ENCODE measurements at regions of chr2 and their contacts with region 1.

Region 1: DNA sequence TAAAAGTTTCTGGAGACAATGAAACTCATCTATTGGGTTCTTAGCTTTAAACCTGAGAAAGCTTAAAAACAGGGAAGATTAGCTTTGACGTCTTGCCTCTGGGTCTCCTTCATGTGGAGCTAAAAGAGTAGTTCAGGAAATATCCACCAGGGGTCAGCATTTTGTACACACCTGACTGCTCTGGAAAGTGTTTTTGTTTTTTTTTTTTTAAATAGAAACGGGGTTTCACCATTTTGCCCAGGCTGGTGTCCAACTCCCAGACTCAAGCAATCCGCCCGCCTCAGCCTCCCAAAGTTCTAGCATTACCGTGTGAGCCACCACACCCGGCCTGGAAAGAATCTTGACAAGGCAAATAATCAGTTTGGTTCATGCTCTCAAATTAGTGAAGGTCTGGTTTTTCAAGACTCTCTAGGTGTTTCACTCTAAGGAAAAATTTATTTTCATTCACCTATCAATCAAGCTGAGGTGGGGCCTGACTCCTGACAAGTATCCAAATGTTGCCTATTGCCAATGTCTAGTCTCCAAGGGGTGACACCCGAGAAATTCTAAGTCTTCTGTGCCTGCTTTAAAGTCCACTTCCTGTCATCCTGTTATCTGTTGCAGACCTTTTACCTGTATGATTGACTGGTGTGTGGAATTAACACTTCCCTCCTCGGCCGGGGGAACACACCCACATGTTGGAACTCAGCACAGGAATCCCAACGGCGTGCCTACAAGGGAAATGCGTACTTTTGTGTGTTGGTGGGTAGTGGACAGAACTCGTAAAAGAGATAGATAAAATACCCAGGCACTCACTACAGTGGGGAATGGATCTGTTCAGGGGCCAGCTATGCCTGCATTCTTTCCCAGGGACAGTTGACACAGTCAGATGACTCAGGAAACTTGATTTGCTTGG is 11.3 kb downstream of the IL1RN start:
- DNase-seq: peak; percentile 61
- H3K4me3 Mint-ChIP-seq: no peak overlapping the region
- H3K27ac Mint-ChIP-seq: peak overlapping the region; percentile 42
- H3K4me1 Mint-ChIP-seq: peaks cover 28% of the 10 kb centered on the region
- H3K27me3 Mint-ChIP-seq: peaks cover 7% of the 10 kb centered on the region

Region 2: GRCh38 chr2:112947374-112947773 is 191.3 kb before region 1 on chr2:
- CTCF ChIA-PET with region 1: no interaction called
- DNase-seq: no peak
- H3K4me3 Mint-ChIP-seq: no peak overlapping the region
- H3K27ac Mint-ChIP-seq: no peak overlapping the region
- H3K4me1 Mint-ChIP-seq: no peaks in the 10 kb centered on the region
- H3K27me3 Mint-ChIP-seq: peaks cover 18% of the 10 kb centered on the region

Region 3: GRCh38 chr2:113061901-113062430 is 76.7 kb before region 1 on chr2:
- CTCF ChIA-PET with region 1: no interaction called
- DNase-seq: no peak
- H3K4me3 Mint-ChIP-seq: no peak overlapping the region
- H3K27ac Mint-ChIP-seq: no peak overlapping the region
- H3K4me1 Mint-ChIP-seq: no peaks in the 10 kb centered on the region
- H3K27me3 Mint-ChIP-seq: peaks cover 7% of the 10 kb centered on the region

Region 4: DNA sequence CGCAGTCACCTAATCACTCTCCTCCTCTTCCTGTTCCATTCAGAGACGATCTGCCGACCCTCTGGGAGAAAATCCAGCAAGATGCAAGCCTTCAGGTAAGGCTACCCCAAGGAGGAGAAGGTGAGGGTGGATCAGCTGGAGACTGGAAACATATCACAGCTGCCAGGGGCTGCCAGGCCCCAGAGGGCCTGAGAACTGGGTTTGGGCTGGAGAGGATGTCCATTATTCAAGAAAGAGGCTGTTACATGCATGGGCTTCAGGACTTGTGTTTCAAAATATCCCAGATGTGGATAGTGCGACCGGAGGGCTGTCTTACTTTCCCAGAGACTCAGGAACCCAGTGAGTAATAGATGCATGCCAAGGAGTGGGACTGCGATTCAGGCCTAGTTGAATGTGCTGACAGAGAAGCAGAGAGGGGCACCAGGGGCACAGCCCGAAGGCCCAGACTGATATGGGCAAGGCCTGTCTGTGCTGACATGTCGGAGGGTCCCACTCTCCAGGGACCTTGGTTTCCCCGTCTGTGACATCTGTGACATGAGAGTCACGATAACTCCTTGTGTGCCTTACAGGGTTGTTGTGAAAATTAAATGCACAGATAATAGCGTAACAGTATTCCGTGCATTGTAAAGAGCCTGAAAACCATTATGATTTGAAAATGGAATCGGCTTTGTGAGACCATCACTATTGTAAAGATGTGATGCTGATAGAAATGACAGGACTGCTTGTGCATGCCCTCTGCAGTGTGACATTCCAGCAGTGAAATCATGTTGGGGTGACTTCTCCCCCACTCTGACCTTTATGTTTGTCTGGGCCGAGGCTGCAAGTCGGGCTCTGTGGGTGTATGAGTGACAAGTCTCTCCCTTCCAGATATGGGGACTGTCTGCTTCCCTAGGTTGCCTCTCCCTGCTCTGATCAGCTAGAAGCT is 10.8 kb before region 1 on chr2:
- CTCF ChIA-PET with region 1: interaction called, 10 read pairs
- DNase-seq: no peak
- H3K4me3 Mint-ChIP-seq: no peak overlapping the region
- H3K27ac Mint-ChIP-seq: no peak overlapping the region
- H3K4me1 Mint-ChIP-seq: peaks cover 14% of the 10 kb centered on the region
- H3K27me3 Mint-ChIP-seq: peaks cover 31% of the 10 kb centered on the region

Region 5: DNA sequence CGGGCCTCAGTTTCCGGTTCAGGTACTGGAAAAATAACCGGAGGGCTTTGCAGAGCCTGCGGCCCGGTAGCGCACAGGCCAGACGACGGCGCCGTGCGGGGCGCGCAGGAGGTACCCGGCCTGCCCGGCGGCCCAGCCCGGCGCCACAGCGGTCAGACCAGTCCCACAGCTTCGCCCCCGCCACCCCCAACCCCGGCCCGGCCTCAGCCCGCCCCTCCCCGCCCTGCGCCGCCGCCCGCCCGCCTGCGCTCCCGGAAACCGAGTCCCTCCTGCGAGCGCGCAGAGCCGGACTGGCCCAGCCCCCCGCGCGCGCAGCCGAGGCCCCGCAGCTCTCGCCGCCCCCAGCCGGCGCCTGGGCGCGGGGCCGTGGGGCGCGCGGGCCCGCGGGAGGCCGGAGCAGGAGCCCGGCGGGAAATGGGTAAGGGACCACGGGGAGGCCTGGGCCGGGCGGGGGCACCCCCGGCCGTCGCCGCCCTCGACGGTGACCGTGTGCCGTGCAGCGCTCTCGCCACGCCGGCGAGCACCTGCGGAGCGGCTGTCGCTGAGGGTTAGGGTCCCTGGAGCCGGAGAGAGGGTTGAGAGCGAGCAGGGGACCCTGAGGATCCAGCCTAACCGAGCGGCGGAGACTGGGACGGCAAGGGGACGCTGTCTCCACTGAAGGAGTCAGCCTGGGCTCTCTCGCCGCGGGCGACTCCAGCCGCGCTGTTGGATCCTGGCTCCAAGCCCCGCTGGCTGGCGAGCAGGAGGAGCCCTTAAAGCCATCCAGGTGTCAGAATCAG is 18.6 kb after region 1 on chr2:
- CTCF ChIA-PET with region 1: interaction called, 22 read pairs
- DNase-seq: peak; percentile 70
- H3K4me3 Mint-ChIP-seq: peak overlapping the region; percentile 80
- H3K27ac Mint-ChIP-seq: peak overlapping the region; percentile 83
- H3K4me1 Mint-ChIP-seq: peaks cover 28% of the 10 kb centered on the region
- H3K27me3 Mint-ChIP-seq: peaks cover 23% of the 10 kb centered on the region

Region 6: DNA sequence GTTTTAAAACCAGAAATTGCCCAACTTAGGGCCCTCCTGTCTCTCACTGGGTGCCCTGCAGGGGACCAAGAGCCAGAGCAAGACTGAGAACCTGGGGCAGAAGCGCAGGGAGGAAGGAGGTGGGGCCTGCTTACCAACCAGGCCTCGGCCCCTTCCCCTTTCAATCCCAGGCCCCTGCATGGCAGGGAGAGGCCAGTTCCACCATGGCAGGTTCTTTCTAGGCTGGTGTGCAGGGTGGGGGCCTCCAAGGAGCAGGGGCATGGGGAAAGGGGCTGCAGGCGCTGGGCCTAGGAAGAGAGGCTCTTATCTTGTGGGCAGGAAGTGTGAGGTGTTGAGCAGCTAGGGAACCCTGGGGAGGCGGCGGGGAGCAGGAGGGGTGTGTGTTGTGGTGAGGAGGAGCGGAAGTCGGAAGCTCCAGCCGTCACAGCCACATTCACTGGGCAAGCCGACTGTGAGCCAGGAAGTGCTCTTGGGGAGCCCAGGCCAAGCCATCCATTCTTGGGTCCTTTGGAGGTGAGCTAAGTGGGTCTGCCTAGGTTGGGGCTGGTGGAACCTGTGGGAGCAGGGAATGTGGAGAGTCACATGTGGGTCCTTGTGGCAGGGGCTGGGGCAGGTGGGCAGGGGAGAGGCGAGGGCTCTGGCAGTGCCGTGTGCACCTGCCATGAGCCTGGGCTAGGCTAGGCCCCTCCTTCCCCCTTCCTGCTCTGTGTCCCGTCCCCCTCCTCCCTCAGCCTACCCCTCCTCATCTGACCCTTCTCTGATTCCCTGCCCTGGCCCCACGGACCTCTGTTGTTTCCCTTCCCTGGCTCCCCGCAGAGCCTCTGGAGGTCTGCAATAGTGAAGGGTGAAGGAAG is 35.1 kb after region 1 on chr2 and contains the start of gene PSD4:
- CTCF ChIA-PET with region 1: interaction called, 220 read pairs
- DNase-seq: peak; percentile 96
- H3K4me3 Mint-ChIP-seq: peak within 1 kb of the TSS; percentile 86
- H3K27ac Mint-ChIP-seq: peak within 1 kb of the TSS; percentile 88
- H3K4me1 Mint-ChIP-seq: peaks cover 76% of the 10 kb centered on the region
- H3K27me3 Mint-ChIP-seq: no peaks in the 10 kb centered on the region

Region 7: GRCh38 chr2:113198790-113199612 is 60.3 kb after region 1 on chr2:
- CTCF ChIA-PET with region 1: interaction called, 209 read pairs
- DNase-seq: peak; percentile 84
- H3K4me3 Mint-ChIP-seq: no peak overlapping the region
- H3K27ac Mint-ChIP-seq: no peak overlapping the region
- H3K4me1 Mint-ChIP-seq: peaks cover 58% of the 10 kb centered on the region
- H3K27me3 Mint-ChIP-seq: no peaks in the 10 kb centered on the region

Region 8: GRCh38 chr2:113233593-113234550 is 95.2 kb after region 1 on chr2:
- CTCF ChIA-PET with region 1: interaction called, 16 read pairs
- DNase-seq: no peak
- H3K4me3 Mint-ChIP-seq: peak overlapping the region; percentile 35
- H3K27ac Mint-ChIP-seq: no peak overlapping the region
- H3K4me1 Mint-ChIP-seq: peaks cover 50% of the 10 kb centered on the region
- H3K27me3 Mint-ChIP-seq: peaks cover 14% of the 10 kb centered on the region

Region 9: GRCh38 chr2:113390124-113390849 is 251.6 kb after region 1 on chr2:
- CTCF ChIA-PET with region 1: interaction called, 17 read pairs
- DNase-seq: peak; percentile 63
- H3K4me3 Mint-ChIP-seq: peak overlapping the region; percentile 53
- H3K27ac Mint-ChIP-seq: peak overlapping the region; percentile 78
- H3K4me1 Mint-ChIP-seq: peaks cover 15% of the 10 kb centered on the region
- H3K27me3 Mint-ChIP-seq: peaks cover 23% of the 10 kb centered on the region